ENCODE measurements at regions of chr6 and their contacts with region 1.

Region 1: GRCh38 chr6:125749173-125749864 is at the start of gene HEY2:
- DNase-seq: peak; percentile 93 to 96
- ATAC-seq: peak; percentile 86 to 97 (median 93)
- H3K4me3 ChIP-seq: peak within 1 kb of the TSS; percentile 60 to 87 (median 76)
- H3K27ac ChIP-seq: peak within 1 kb of the TSS; percentile 88 to 98 (median 96)
- H3K4me1 ChIP-seq: peaks cover 0 to 56% (median 23%) of the 10 kb centered on the region in 9 donors
- H3K27me3 ChIP-seq: peaks cover 0 to 90% (median 0%) of the 10 kb centered on the region in 7 donors
- CTCF ChIP-seq: peak in 4 of 9 donors; percentile 7 to 30 (median 28)
- total RNA-seq, gene HEY2: 12.4 to 75.1 (median 36.2) TPM

Region 2: GRCh38 chr6:124780623-124781022 is 968.7 kb before region 1 on chr6:
- intact Hi-C with region 1: no loop called
- DNase-seq: no peak
- ATAC-seq: no peak
- H3K4me3 ChIP-seq: no peak overlapping the region
- H3K27ac ChIP-seq: no peak overlapping the region
- H3K4me1 ChIP-seq: no peaks in the 10 kb centered on the region
- H3K27me3 ChIP-seq: no peaks in the 10 kb centered on the region
- CTCF ChIP-seq: no peak

Region 3: DNA sequence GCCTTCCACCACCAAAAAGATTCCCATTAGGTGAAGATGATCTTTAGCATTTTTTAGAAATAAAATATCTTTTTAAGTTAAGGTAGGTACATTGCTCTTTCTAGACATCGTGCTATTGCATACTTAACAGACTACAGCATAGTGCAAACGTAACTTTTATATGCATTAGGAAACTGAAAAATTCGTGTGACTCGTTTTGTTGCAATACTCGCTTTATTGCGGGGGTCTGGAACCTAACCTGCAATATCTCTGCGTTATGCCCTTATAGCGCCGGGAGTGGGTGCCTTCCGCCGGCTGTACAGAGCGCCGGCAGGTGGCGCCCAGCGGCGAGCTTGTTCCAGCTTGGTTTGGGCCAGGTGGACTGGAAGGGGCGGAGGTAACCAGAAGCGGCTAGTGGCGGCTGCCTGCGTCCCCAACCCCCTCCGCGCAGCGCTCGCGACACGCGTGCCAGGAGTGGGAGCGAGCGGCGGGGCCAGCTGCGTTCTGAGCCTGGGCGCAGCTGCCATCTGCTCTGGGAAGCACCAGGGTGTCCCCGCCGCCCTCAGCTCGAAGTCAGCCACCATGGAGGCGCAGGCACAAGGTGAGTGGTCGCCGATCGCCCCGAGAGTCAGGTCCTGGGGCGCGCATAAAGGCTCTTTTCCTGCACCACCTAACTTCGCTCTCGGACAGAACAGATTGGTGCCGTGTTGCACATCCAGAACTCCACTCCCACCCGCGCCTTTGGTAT is 595.8 kb before region 1 on chr6 and contains the start of gene TPD52L1:
- intact Hi-C with region 1: loop called in 2 of 10 experiments (anchors 5 to 10 kb)
- DNase-seq: peak; percentile 81
- ATAC-seq: peak; percentile 91 to 97 (median 94)
- H3K4me3 ChIP-seq: peak within 1 kb of the TSS; percentile 62 to 83 (median 74)
- H3K27ac ChIP-seq: peak within 1 kb of the TSS; percentile 66 to 90 (median 80)
- H3K4me1 ChIP-seq: peaks cover 0 to 39% (median 21%) of the 10 kb centered on the region in 9 donors
- H3K27me3 ChIP-seq: peaks cover 0 to 21% (median 0%) of the 10 kb centered on the region in 7 donors
- CTCF ChIP-seq: peak; percentile 66 to 92 (median 85)
- total RNA-seq, gene TPD52L1: 39.4 to 97.8 (median 59.8) TPM

Region 4: DNA sequence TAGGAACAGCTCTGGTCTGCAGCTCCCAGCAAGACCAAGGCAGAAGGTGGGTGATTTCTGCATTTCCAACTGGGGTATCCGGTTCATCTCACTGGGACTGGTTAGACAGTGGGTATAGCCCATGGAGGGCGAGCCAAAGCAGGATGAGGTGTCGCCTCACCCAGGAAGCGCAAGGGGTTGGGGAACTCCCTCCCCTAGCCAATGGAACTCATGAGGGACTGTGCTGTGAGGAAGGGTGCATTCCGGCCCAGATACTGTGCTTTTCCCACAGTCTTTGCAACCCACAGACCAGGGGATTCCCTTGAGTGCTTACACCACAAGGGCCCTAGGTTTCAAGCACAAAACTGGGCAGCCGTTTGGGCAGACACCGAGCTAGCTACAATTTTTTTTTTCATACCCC is 469.4 kb before region 1 on chr6:
- intact Hi-C with region 1: no loop called
- DNase-seq: no peak
- ATAC-seq: no peak
- H3K4me3 ChIP-seq: no peak overlapping the region
- H3K27ac ChIP-seq: no peak overlapping the region
- H3K4me1 ChIP-seq: peaks cover 0 to 4% (median 0%) of the 10 kb centered on the region in 9 donors
- H3K27me3 ChIP-seq: no peaks in the 10 kb centered on the region
- CTCF ChIP-seq: no peak

Region 5: GRCh38 chr6:125444006-125444923 is 305.1 kb before region 1 on chr6:
- intact Hi-C with region 1: loop called in 2 of 10 experiments (anchors 10 kb)
- DNase-seq: peak; percentile 67 to 82
- ATAC-seq: peak; percentile 81 to 95 (median 92)
- H3K4me3 ChIP-seq: peak overlapping the region in 1 of 10 donors; percentile 21
- H3K27ac ChIP-seq: peak overlapping the region in 9 of 10 donors; percentile 9 to 78 (median 65)
- H3K4me1 ChIP-seq: peaks cover 0 to 19% (median 4%) of the 10 kb centered on the region in 9 donors
- H3K27me3 ChIP-seq: no peaks in the 10 kb centered on the region
- CTCF ChIP-seq: no peak

Region 6: DNA sequence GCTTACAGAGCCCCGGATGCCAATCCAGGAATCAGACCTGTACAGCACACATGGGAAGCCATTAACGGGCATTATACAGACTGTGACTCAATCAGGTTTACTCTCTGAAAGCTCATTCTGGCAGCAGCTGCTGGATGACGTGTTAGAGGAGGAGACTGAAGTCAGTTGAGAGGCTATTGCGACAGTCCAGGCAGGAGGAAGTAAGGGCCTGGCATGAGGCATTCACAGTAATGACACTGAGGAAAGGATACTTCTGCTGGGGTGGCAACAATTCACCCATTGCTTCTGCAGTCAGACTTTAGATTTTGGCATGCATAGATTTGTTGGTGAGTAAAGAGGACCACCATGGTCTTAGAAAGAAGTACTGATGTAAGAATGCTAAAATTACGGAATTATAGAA is 150.9 kb before region 1 on chr6:
- intact Hi-C with region 1: loop called in 1 of 10 experiments (anchors 5 kb)
- DNase-seq: peak; percentile 28 to 39
- ATAC-seq: peak; percentile 46 to 94 (median 80)
- H3K4me3 ChIP-seq: no peak overlapping the region
- H3K27ac ChIP-seq: peak overlapping the region in 7 of 10 donors; percentile 37 to 80 (median 54)
- H3K4me1 ChIP-seq: peaks cover 0 to 20% (median 7%) of the 10 kb centered on the region in 9 donors
- H3K27me3 ChIP-seq: no peaks in the 10 kb centered on the region
- CTCF ChIP-seq: no peak

Region 7: DNA sequence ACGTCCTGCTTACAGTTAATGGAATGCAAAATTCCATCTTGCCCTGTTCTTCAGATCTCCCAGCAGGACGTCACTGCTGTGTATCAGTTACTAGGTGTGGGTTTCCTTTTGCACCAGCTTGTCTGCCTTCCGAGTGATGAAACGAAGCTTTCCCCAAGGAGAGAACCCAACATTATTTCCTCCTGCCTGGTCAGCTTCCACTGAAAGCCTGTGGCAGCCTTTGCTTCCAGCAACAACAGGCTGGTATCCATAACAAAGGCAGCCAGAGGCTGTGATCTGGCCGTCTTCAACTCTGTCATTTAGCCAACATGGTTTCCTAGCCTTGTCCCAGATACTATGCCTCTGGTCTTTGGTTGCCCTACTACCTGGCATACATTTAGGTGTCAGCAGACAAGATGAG is 78.8 kb before region 1 on chr6:
- intact Hi-C with region 1: loop called in 4 of 10 experiments (anchors 1 to 5 kb)
- DNase-seq: peak in 1 of 2 donors; percentile 49
- ATAC-seq: peak; percentile 85 to 97 (median 95)
- H3K4me3 ChIP-seq: peak overlapping the region in 2 of 10 donors; percentile 5 to 14
- H3K27ac ChIP-seq: peak overlapping the region in 8 of 10 donors; percentile 29 to 69 (median 52)
- H3K4me1 ChIP-seq: peaks cover 0 to 15% (median 0%) of the 10 kb centered on the region in 9 donors
- H3K27me3 ChIP-seq: no peaks in the 10 kb centered on the region
- CTCF ChIP-seq: no peak

Region 8: GRCh38 chr6:125700581-125701353 is 48.6 kb before region 1 on chr6:
- intact Hi-C with region 1: no loop called
- DNase-seq: no peak
- ATAC-seq: no peak
- H3K4me3 ChIP-seq: no peak overlapping the region
- H3K27ac ChIP-seq: no peak overlapping the region
- H3K4me1 ChIP-seq: no peaks in the 10 kb centered on the region
- H3K27me3 ChIP-seq: no peaks in the 10 kb centered on the region
- CTCF ChIP-seq: no peak

Region 9: DNA sequence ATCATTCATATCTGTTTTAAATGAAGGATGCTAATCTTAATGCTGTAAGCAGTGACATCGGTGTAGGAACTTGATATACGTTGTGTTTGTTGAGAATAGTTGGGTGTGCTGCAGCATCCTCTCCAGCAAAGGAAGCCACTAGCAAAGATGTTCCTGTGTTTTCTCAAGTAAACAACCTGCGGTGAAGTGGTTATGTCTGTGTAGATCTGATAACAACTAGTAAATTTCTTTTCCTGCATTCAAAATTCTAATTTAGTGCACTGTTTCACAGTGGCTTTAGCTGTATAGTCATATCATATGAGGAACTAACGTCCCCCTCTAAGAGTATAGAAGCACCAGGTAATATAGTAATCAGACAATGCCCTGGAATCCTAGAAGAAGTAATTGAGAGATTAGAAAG is 80.1 kb after region 1 on chr6:
- intact Hi-C with region 1: no loop called
- DNase-seq: no peak
- ATAC-seq: no peak
- H3K4me3 ChIP-seq: no peak overlapping the region
- H3K27ac ChIP-seq: peak overlapping the region in 2 of 10 donors; percentile 24 to 31
- H3K4me1 ChIP-seq: peaks cover 0 to 61% (median 24%) of the 10 kb centered on the region in 9 donors
- H3K27me3 ChIP-seq: no peaks in the 10 kb centered on the region
- CTCF ChIP-seq: no peak